CD14-positive monocyte (primary cell): ENCODE measurements at regions of chr18 and their contacts with region 1.

Region 1: DNA sequence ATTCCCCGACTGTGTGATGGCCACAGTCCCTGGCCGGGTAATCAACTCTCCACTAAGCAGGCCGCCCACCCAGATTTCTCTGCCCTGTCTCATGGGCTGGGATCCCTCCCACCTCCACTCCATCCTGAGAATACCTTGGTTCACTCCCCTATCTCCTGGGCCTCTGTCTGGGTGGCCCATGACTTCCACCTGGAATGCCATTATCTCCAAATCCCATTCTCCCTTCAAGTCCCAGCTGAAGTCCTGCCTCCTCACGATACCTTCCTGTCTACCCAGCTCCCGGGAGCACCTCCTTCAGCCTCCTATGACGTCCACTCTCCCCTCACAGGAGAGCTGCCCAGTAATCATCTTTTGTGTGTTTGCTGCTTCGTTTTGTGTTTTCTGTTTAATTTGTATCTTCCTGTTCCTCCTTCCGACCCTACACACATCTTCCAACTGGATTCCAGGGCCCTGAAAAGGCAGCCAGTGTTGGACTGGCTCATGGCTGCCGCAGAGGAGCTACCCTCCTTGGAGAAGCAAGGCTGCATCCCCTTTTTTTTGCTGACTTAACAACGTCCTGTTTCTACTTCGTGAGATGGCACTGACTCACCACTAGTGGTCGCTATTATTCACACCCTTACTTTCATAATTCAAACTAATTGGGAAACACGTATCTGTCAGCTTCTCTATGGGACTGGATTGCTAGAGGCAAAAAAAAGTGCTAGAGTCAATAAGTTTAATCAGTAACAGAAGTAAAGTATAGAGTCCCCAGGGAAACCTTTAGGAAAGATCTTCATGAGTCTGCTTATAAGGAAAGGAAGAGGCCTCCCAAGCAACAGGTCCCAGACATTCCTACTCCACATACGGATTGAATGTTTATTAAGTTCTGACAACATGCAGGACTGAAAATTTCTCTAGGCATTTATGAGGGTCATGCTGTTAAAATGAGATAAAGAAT is 171.9 kb upstream of the GATA6 start:
- DNase-seq: peak; percentile 15 to 42 (median 41)
- H3K4me3 ChIP-seq: no peak overlapping the region
- H3K4me3 Mint-ChIP-seq: no peak overlapping the region
- H3K27ac ChIP-seq: no peak overlapping the region
- H3K27ac Mint-ChIP-seq: peak overlapping the region in 1 of 7 donors; percentile 21
- H3K4me1 ChIP-seq: no peaks in the 10 kb centered on the region
- H3K4me1 Mint-ChIP-seq: peaks cover 4% of the 10 kb centered on the region
- H3K27me3 ChIP-seq: no peaks in the 10 kb centered on the region
- H3K27me3 Mint-ChIP-seq: peaks cover 2 to 4% (median 2%) of the 10 kb centered on the region in 3 donors
- CTCF ChIP-seq: peak; percentile 81

Region 2: DNA sequence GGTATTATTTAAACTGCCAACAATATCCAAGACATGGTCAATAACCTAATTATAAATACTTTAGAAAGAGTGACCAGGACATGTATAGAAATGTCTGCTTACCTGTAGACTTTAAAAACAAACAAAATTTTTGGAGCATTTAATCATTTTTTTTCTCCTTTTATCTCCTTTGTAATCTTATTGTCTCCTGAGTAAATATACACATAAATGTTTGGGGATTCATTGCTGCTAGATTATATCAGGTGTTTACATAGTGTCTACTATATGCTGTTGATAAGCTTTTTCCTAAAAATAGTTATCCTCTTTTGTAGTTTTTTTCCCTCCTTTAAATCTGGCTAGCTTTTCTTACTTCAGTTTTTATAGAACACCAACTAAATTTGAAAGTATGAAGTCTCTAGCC is 131.7 kb before region 1 on chr18:
- intact Hi-C with region 1: no loop called
- DNase-seq: no peak
- H3K4me3 ChIP-seq: no peak overlapping the region
- H3K4me3 Mint-ChIP-seq: no peak overlapping the region
- H3K27ac ChIP-seq: no peak overlapping the region
- H3K27ac Mint-ChIP-seq: peak overlapping the region in 1 of 7 donors; percentile 54
- H3K4me1 ChIP-seq: no peaks in the 10 kb centered on the region
- H3K4me1 Mint-ChIP-seq: peaks cover 1% of the 10 kb centered on the region
- H3K27me3 ChIP-seq: no peaks in the 10 kb centered on the region
- H3K27me3 Mint-ChIP-seq: no peaks in the 10 kb centered on the region
- CTCF ChIP-seq: no peak

Region 3: DNA sequence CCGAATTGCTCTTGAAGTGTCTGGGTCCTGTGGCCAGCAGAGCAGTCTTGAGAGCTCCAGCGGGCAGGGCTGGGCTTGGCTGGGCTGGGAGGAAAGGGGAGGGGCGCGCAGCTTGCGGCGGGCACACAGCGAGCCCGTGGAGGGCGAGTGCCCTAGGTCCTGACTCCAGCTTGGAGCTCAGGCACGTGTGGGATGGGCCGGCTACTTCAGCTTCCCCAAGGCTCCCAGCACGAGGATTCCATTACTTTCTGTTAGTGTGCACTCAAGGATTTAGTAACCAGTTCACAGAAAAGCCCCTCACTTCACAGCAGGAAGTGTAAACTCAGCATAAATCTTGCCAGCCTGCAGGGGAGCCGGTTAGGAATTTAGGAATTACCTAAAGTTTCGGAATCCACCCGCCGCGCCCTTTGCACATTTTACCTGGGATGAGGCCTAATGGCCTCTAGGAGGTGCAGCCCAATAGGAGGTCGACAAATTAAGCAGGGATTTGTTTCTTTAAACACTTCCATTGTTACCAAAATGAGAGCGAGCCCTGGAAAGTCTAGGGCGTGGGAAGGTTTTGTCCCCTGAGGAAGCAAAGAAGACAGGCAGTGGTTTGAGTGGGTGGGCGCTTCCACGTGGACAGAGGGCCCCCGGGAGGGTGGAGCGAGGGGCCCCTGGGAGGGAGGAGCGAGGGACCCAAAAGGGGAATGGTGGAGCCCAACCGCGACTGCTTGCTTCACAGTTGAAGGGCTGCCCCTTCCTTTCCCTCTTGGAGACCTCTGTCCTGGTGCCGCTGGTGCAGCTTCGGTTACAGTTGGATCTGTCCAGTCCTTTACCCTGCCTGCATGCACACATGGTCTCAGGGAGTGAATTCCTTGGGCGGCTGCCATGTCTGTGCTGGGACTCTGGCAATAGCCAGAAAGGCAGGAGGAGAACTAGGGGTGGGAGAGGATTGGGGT is 327.0 kb after region 1 on chr18:
- intact Hi-C with region 1: no loop called
- DNase-seq: peak; percentile 24 to 54 (median 46)
- H3K4me3 ChIP-seq: peak overlapping the region; percentile 9 to 66 (median 28)
- H3K4me3 Mint-ChIP-seq: peak overlapping the region; percentile 73 to 80
- H3K27ac ChIP-seq: peak overlapping the region; percentile 25 to 65
- H3K27ac Mint-ChIP-seq: peak overlapping the region; percentile 80 to 94 (median 90)
- H3K4me1 ChIP-seq: peaks cover 47 to 55% of the 10 kb centered on the region in 2 donors
- H3K4me1 Mint-ChIP-seq: peaks cover 21% of the 10 kb centered on the region
- H3K27me3 ChIP-seq: no peaks in the 10 kb centered on the region
- H3K27me3 Mint-ChIP-seq: peaks cover 4 to 14% (median 9%) of the 10 kb centered on the region in 3 donors
- CTCF ChIP-seq: peak; percentile 19

Region 4: GRCh38 chr18:22703883-22704585 is 706.6 kb after region 1 on chr18:
- intact Hi-C with region 1: loop called in 1 of 2 experiments (anchors 10 kb)
- DNase-seq: peak in 2 of 3 donors; percentile 9 to 17
- H3K4me3 ChIP-seq: no peak overlapping the region
- H3K4me3 Mint-ChIP-seq: no peak overlapping the region
- H3K27ac ChIP-seq: no peak overlapping the region
- H3K27ac Mint-ChIP-seq: no peak overlapping the region
- H3K4me1 ChIP-seq: no peaks in the 10 kb centered on the region
- H3K4me1 Mint-ChIP-seq: no peaks in the 10 kb centered on the region
- H3K27me3 ChIP-seq: no peaks in the 10 kb centered on the region
- H3K27me3 Mint-ChIP-seq: peaks cover 0 to under 1% (median 0%) of the 10 kb centered on the region in 3 donors
- CTCF ChIP-seq: peak; percentile 82